Posterior cingulate gyrus (tissue), 11 donors: ENCODE measurements at regions of chr3 and their contacts with region 1.

Region 1: DNA sequence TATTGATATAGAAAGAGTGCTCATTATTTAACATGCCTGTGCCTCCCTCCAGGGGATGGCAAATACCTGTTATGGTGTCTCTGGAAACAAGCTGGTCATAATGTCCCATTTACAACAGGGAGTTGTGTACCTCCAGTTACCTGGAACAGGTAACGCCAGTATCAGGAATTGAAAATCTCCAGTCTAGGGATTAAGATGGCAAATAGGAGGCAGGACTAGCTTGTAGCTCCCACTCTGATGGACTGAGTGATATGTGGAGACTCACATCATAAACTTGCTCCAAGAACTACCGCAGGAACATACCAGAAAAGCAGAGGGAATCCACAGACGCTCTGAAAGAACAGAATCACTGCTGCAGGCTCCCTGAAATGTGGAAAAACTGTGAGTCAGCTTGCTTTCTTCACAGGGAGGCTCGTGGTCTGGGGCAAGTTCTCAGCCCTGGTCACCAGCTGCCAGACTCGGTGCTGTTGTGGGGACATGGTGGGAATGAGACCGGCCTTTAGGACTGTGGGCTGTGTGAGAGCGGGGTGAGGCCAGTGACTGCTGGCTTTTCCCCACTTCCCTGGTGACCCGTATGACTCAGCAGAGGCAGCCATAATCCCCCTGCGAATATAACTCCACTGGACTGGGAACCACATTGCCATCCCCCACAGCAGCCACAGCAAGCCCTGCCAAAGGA is 97.4 kb downstream of the KCNAB1 start:
- DNase-seq: no peak

Region 2: GRCh38 chr3:156233876-156234275 is 16.1 kb after region 1 on chr3:
- intact Hi-C with region 1: loop called (anchors 1 kb)
- DNase-seq: no peak